HCT116 (cell line): ENCODE measurements at regions of chr7 and their contacts with region 1.

Region 1: DNA sequence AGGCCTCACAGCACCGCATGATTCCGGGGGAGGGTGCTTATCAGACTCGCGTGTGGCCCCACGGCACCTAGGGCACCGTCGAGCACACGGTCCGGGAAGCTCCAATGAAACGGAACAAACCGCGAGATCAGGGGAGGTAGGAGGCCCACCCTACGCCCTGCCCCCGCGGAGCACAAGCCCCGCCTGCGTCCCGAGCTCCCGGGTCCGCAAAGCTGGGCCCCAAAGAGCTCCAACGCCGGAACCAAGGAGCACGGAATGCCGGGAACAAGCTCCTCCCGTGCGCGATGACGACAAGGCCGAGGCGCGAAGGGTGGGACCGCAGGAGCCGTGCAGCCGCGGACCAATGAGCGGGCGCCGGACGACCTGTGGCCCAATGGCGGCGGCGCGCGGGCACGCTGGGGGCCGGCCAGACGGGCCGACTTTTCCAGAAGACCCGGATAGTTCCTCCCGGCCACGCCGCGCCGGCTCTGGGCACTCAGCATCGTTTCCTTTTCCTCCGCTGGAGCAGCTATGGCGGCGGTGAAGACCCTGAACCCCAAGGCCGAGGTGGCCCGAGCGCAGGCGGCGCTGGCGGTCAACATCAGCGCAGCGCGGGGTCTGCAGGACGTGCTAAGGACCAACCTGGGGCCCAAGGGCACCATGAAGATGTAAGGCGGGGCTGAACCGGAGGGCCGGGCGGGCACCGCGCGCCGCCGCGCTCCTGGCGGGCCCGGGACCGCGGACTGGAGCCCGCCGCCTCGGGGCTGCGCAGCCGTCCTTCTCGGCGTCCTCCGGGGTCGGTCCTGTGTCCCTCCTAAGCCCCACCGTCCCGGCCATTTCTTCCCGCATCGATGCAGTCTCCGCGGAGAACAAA is at the starts of genes CCT6A and PSPH:
- DNase-seq: peak; percentile 95
- ATAC-seq: peak; percentile 92
- H3K4me3 ChIP-seq: peak within 1 kb of the TSS; percentile 90 to 98
- H3K27ac ChIP-seq: peak within 1 kb of the TSS; percentile 94
- H3K4me1 ChIP-seq: peaks cover 22 to 34% of the 10 kb centered on the region in 2 experiments
- H3K27me3 ChIP-seq: no peaks in the 10 kb centered on the region
- CTCF ChIP-seq: no peak
- POLR2A ChIP-seq: peak; percentile 75
- RAD21 ChIP-seq: no peak
- total RNA-seq, gene CCT6A: 257 TPM
- total RNA-seq, gene PSPH: 50.7 TPM

Region 2: GRCh38 chr7:55774326-55775064 is 277.1 kb before region 1 on chr7:
- CTCF ChIA-PET with region 1: no interaction called
- POLR2A ChIA-PET with region 1: no interaction called
- RAD21 ChIA-PET with region 1: no interaction called
- intact Hi-C with region 1: no loop called
- DNase-seq: no peak
- ATAC-seq: peak; percentile 47; the same call in 1 of the 2 replicates
- H3K4me3 ChIP-seq: no peak overlapping the region
- H3K27ac ChIP-seq: peak overlapping the region; percentile 38; the same call in 1 of the 2 replicates
- H3K4me1 ChIP-seq: peaks cover 4 to 10% of the 10 kb centered on the region in 2 experiments; a peak in 3 of 4 replicates
- H3K27me3 ChIP-seq: no peaks in the 10 kb centered on the region
- CTCF ChIP-seq: no peak
- POLR2A ChIP-seq: no peak
- RAD21 ChIP-seq: no peak

Region 3: DNA sequence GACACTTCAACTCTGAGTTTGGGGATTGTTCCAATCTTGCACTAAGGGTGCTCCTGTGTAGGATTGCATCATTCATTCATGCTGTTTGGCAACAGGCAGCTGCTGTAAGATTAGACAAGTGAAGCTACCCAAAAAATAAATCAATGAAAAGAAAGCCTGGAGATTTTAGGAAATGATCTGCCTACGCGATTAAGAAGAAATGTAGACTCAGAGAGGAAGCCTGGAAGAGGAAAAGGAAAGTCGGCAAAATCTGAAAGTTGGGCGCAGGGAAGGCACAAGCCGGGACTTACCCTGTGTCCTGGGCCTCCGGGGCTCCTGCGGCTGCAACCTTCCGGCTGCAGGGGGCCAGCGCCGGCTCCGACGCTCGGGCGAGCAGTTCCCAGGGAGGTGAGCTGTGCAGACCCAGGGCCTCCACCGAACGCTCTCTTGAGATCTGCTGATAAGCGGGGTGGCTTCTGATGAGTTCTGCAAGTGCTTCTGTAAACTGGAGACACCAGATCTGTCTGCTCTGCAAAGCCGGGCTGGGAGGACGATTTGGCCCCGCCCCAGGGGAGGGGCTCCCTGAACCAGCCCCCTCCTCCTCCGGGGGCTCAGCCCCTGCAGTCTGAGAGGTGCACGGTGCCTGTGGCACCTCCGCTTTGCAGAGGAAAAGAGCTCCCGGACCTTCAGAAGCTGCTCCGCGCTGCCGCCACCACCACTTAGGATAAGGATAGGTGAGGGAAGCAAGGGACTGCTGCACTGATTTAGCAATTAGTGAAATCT is 17.7 kb before region 1 on chr7:
- CTCF ChIA-PET with region 1: interaction called, 3 read pairs
- POLR2A ChIA-PET with region 1: interaction called, 23 read pairs
- RAD21 ChIA-PET with region 1: interaction called in 1 of 2 experiments, 3 read pairs
- intact Hi-C with region 1: loop called (anchors 2 kb)
- DNase-seq: peak; percentile 37
- ATAC-seq: peak; percentile 94
- H3K4me3 ChIP-seq: peak overlapping the region; percentile 62 to 66
- H3K27ac ChIP-seq: peak overlapping the region; percentile 82
- H3K4me1 ChIP-seq: peaks cover 8 to 18% of the 10 kb centered on the region in 2 experiments; a peak in 2 of 4 replicates
- H3K27me3 ChIP-seq: no peaks in the 10 kb centered on the region
- CTCF ChIP-seq: peak in 2 of 3 experiments; percentile 38 to 40; a peak in 4 of 6 replicates
- POLR2A ChIP-seq: no peak
- RAD21 ChIP-seq: no peak

Region 4: DNA sequence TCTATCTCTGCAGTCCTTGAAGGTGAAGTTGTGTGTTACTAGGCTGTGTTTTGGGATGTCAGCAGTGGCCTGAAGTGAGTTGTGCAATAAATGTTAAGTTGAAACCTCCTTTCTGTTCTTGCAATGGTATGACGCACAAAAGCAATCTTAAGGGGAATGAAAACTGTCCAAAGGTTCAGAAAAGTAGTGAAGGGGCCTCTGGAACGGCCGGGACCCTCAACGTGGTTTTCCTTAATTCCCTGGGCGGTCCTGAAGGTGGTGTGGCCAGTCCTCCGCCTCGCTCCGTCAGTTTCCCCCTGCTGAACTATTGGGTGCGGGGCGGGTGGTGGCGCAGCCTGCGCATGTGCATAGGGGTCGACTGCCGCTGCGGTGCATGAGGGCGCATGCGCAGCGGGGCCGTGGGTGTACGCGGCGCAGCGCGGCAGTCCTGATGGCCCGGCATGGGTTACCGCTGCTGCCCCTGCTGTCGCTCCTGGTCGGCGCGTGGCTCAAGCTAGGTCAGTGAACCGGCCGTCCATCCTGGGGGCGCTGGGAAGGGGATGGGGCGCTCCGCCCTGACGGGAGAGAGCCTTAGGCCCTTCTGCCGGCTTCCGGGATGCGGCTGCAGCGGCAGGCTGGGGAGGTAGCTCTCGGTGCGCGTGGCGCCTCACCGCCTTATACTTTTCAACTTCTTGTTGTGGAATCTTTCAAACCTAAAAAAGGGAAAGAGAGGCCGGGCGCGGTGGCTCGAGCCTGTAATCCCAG is 12.5 kb after region 1 on chr7 and contains the start of gene SUMF2:
- CTCF ChIA-PET with region 1: interaction called, 7 read pairs
- POLR2A ChIA-PET with region 1: interaction called, 64 read pairs
- RAD21 ChIA-PET with region 1: no interaction called
- intact Hi-C with region 1: no loop called
- DNase-seq: peak; percentile 78
- ATAC-seq: peak; percentile 86
- H3K4me3 ChIP-seq: peak within 1 kb of the TSS; percentile 88 to 94
- H3K27ac ChIP-seq: peak within 1 kb of the TSS; percentile 98
- H3K4me1 ChIP-seq: peaks cover 32 to 56% of the 10 kb centered on the region in 2 experiments
- H3K27me3 ChIP-seq: no peaks in the 10 kb centered on the region
- CTCF ChIP-seq: no peak
- POLR2A ChIP-seq: peak; percentile 82
- RAD21 ChIP-seq: no peak; the same call in 1 of the 2 replicates
- total RNA-seq, gene SUMF2: 173 TPM